ENCODE measurements at regions of chr1 and their contacts with region 1.

Region 1: GRCh38 chr1:12658531-12659453 is 14.9 kb downstream of the AADACL4 start:
- DNase-seq: peak; percentile 17 to 89
- H3K4me3 ChIP-seq: no peak overlapping the region
- H3K27ac ChIP-seq: no peak overlapping the region
- H3K4me1 ChIP-seq: no peaks in the 10 kb centered on the region
- H3K27me3 ChIP-seq: peaks cover 0 to 1% (median 0%) of the 10 kb centered on the region in 4 experiments; a peak in 1 of 7 replicates
- CTCF ChIP-seq: peak; percentile 83 to 98 (median 89)
- EP300 ChIP-seq: no peak
- POLR2A ChIP-seq: no peak
- RAD21 ChIP-seq: peak; percentile 95 to 96

Region 2: GRCh38 chr1:12294076-12294475 is 364.7 kb before region 1 on chr1:
- CTCF ChIA-PET with region 1: no interaction called
- POLR2A ChIA-PET with region 1: no interaction called
- DNase-seq: no peak
- H3K4me3 ChIP-seq: no peak overlapping the region
- H3K27ac ChIP-seq: no peak overlapping the region
- H3K4me1 ChIP-seq: no peaks in the 10 kb centered on the region
- H3K27me3 ChIP-seq: peaks cover 0 to under 1% (median 0%) of the 10 kb centered on the region in 4 experiments; a peak in 1 of 7 replicates
- CTCF ChIP-seq: no peak
- EP300 ChIP-seq: no peak
- POLR2A ChIP-seq: no peak
- RAD21 ChIP-seq: no peak

Region 3: GRCh38 chr1:12314333-12314903 is 344.4 kb before region 1 on chr1:
- CTCF ChIA-PET with region 1: interaction called, 11 read pairs
- POLR2A ChIA-PET with region 1: no interaction called
- DNase-seq: no peak
- H3K4me3 ChIP-seq: no peak overlapping the region
- H3K27ac ChIP-seq: no peak overlapping the region
- H3K4me1 ChIP-seq: 0 out of 7 replicates have a peak, but pooled peaks cover 0 to 2% (median 0%) of the 10 kb centered on the region in 4 experiments
- H3K27me3 ChIP-seq: no peaks in the 10 kb centered on the region
- CTCF ChIP-seq: peak in 1 of 3 experiments; percentile 28; a peak in 1 of 4 replicates
- EP300 ChIP-seq: no peak
- POLR2A ChIP-seq: no peak
- RAD21 ChIP-seq: peak in 1 of 2 experiments; percentile 28; a peak in 3 of 4 replicates

Region 4: DNA sequence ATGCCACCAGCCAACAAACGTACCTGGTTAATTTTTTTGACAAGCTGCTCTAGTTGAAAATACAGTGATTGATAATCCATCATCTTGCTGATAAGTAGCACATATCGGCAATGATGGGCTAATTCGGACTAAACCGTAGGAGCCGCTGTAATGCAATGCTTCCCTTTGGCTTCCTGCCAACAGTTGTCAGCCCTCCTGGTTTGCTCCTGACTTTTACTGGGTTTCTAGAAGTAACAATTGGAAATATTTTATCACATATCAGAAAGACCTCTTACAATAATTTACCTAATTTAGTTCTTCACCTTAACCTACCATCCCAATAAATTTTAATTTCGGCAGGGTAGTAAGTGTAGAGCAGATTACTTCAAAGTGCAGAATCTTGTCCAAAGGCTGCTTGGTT is 189.3 kb before region 1 on chr1:
- CTCF ChIA-PET with region 1: no interaction called
- POLR2A ChIA-PET with region 1: no interaction called
- DNase-seq: no peak
- H3K4me3 ChIP-seq: no peak overlapping the region
- H3K27ac ChIP-seq: no peak overlapping the region
- H3K4me1 ChIP-seq: no peaks in the 10 kb centered on the region; a peak in 1 of 7 replicates
- H3K27me3 ChIP-seq: no peaks in the 10 kb centered on the region
- CTCF ChIP-seq: no peak
- EP300 ChIP-seq: no peak
- POLR2A ChIP-seq: no peak
- RAD21 ChIP-seq: no peak

Region 5: GRCh38 chr1:12619792-12620487 is 38.9 kb before region 1 on chr1:
- CTCF ChIA-PET with region 1: interaction called, 42 read pairs
- POLR2A ChIA-PET with region 1: interaction called, 4 read pairs
- DNase-seq: peak in 1 of 2 experiments; percentile 93
- H3K4me3 ChIP-seq: peak overlapping the region; percentile 81 to 97 (median 90)
- H3K27ac ChIP-seq: no peak overlapping the region
- H3K4me1 ChIP-seq: peaks cover 4 to 24% (median 12%) of the 10 kb centered on the region in 4 experiments; a peak in 6 of 7 replicates
- H3K27me3 ChIP-seq: no peaks in the 10 kb centered on the region; a peak in 1 of 7 replicates
- CTCF ChIP-seq: peak in 2 of 3 experiments; percentile 94 to 95; a peak in 3 of 4 replicates
- EP300 ChIP-seq: no peak
- POLR2A ChIP-seq: no peak
- RAD21 ChIP-seq: peak; percentile 98 to 99

Region 6: DNA sequence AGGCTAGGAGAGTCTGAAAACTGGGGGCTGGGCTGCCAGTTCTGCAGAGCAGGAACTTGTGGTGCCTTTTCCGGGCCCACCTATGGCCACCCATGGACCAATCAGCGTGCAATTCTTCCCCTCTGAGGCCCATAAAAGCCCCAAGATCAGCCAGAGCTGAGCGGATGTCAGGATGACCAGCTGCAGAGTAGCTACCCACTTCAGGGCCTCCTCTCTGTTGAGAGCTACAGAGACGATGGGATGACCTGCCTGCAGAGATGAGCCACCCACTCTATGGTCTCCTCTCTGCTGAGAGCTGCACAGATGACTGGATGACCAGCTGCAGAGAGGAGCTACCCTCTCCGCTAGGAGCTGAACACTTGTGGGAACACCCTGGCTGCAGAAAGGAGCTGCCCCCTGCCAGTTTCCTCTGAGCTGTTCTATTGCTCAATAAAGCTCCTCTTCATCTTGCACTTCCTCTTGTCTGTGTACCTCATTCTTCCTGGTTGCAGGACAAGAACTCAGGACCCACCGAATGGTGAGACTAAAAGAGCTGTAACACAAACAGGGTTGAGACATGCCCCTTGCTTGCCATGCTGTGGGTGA is 27.8 kb before region 1 on chr1:
- CTCF ChIA-PET with region 1: interaction called, 30 read pairs
- POLR2A ChIA-PET with region 1: interaction called, 4 read pairs
- DNase-seq: no peak
- H3K4me3 ChIP-seq: no peak overlapping the region
- H3K27ac ChIP-seq: 0 out of 2 replicates have a peak overlapping the region, but pooled peaks have one; percentile 59
- H3K4me1 ChIP-seq: peaks cover 10 to 29% (median 20%) of the 10 kb centered on the region in 4 experiments
- H3K27me3 ChIP-seq: no peaks in the 10 kb centered on the region
- CTCF ChIP-seq: no peak
- EP300 ChIP-seq: no peak
- POLR2A ChIP-seq: no peak
- RAD21 ChIP-seq: no peak

Region 7: DNA sequence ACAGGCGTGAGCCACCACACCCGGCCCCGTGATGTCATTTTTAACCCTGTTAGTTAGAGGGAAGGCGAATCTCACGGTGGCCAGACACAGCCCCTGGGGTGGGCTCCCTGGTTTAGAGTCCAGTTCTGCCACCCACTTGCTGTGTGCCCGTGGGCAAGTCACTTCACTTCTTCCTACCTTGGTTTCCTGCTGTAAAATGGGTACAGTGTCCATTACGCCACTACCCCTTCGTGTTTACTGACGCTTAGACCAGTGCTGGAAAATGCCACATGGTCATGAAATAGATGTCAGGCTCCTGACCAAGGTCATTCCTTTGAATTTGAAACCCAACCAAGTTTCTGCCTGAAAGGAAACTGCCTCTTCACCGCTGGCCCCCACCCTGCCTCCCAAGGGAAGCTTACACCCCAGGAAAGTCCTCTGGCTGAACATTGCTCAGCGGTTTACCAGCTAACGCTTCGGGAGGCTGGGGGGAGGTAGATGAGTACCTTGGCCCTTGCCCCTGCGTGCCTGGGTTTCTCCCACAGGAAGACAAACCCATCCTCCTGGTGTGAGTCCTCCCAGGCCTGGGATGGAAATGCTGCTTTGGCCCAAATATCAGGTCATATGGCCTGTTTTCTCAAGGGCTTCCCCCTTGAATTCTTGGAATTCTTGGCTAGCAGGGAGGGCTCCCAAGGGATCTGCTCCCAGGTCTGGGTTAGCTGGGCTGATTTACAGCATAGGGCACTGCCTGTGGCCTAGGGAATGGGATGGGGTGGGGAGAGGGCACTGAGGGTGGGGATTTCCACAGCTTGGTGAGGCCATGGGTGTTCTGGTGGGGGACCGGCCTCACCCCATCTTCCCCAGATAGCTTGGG is 22.5 kb before region 1 on chr1:
- CTCF ChIA-PET with region 1: interaction called, 30 read pairs
- POLR2A ChIA-PET with region 1: no interaction called
- DNase-seq: peak in 1 of 2 experiments; percentile 61
- H3K4me3 ChIP-seq: no peak overlapping the region
- H3K27ac ChIP-seq: peak overlapping the region; percentile 43; the same call in 1 of the 2 replicates
- H3K4me1 ChIP-seq: peaks cover 5 to 19% (median 10%) of the 10 kb centered on the region in 4 experiments; a peak in 6 of 7 replicates
- H3K27me3 ChIP-seq: no peaks in the 10 kb centered on the region
- CTCF ChIP-seq: no peak
- EP300 ChIP-seq: peak in 1 of 2 experiments; percentile 9; a peak in 1 of 3 replicates
- POLR2A ChIP-seq: peak in 1 of 2 experiments; percentile 39; a peak in 1 of 3 replicates
- RAD21 ChIP-seq: no peak

Region 8: GRCh38 chr1:12643079-12643478 is 15.7 kb before region 1 on chr1:
- CTCF ChIA-PET with region 1: interaction called, 30 read pairs
- POLR2A ChIA-PET with region 1: interaction called, 4 read pairs
- DNase-seq: no peak
- H3K4me3 ChIP-seq: no peak overlapping the region
- H3K27ac ChIP-seq: no peak overlapping the region
- H3K4me1 ChIP-seq: peaks cover 0 to 5% (median 2%) of the 10 kb centered on the region in 4 experiments; a peak in 4 of 7 replicates
- H3K27me3 ChIP-seq: no peaks in the 10 kb centered on the region; a peak in 1 of 7 replicates
- CTCF ChIP-seq: peak in 1 of 3 experiments; percentile 12; a peak in 1 of 4 replicates
- EP300 ChIP-seq: no peak
- POLR2A ChIP-seq: no peak
- RAD21 ChIP-seq: peak in 1 of 2 experiments; percentile 22; a peak in 1 of 4 replicates

Region 9: DNA sequence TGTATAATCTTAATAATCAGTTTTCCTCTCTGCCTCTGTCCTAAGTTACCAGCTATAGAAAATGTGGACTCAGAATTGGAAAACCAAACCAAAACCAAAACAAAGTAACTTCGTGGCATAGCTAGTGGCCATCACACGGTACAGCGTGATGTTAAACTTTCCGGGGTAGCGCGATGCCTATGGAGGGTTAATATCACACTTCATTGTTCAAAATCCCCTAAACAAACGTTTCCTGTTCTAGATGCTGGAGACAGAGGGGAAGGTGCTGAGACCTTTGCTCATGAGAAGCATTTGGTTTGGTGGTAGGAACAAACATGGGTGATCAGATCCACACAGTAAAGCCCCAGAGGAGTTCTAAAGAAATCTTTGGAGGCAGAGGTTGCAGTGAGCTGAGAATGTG is 10.1 kb before region 1 on chr1:
- CTCF ChIA-PET with region 1: interaction called, 14 read pairs
- POLR2A ChIA-PET with region 1: interaction called, 4 read pairs
- DNase-seq: no peak
- H3K4me3 ChIP-seq: no peak overlapping the region
- H3K27ac ChIP-seq: no peak overlapping the region
- H3K4me1 ChIP-seq: peaks cover 0 to 5% (median 2%) of the 10 kb centered on the region in 4 experiments; a peak in 4 of 7 replicates
- H3K27me3 ChIP-seq: no peaks in the 10 kb centered on the region; a peak in 1 of 7 replicates
- CTCF ChIP-seq: no peak
- EP300 ChIP-seq: no peak
- POLR2A ChIP-seq: no peak
- RAD21 ChIP-seq: no peak

Measured in H1 (cell line).